Motor neuron (in vitro differentiated cells): ENCODE measurements at regions of chr2 and their contacts with region 1.

Region 1: GRCh38 chr2:64873472-64873924 is 115.7 kb upstream of the SLC1A4 start:
- ATAC-seq: peak; percentile 30 to 85 (median 43)
- H3K4me3 ChIP-seq: no peak overlapping the region
- H3K27ac ChIP-seq: no peak overlapping the region
- H3K4me1 ChIP-seq: peaks cover 6 to 13% of the 10 kb centered on the region in 2 donors

Region 2: GRCh38 chr2:64036034-64036705 is 837.3 kb before region 1 on chr2:
- in situ Hi-C with region 1: loop called in 1 of 9 experiments (anchors 25 kb)
- ATAC-seq: peak in 2 of 8 experiments; percentile 71 to 92
- H3K4me3 ChIP-seq: no peak overlapping the region
- H3K27ac ChIP-seq: no peak overlapping the region
- H3K4me1 ChIP-seq: no peaks in the 10 kb centered on the region

Region 3: DNA sequence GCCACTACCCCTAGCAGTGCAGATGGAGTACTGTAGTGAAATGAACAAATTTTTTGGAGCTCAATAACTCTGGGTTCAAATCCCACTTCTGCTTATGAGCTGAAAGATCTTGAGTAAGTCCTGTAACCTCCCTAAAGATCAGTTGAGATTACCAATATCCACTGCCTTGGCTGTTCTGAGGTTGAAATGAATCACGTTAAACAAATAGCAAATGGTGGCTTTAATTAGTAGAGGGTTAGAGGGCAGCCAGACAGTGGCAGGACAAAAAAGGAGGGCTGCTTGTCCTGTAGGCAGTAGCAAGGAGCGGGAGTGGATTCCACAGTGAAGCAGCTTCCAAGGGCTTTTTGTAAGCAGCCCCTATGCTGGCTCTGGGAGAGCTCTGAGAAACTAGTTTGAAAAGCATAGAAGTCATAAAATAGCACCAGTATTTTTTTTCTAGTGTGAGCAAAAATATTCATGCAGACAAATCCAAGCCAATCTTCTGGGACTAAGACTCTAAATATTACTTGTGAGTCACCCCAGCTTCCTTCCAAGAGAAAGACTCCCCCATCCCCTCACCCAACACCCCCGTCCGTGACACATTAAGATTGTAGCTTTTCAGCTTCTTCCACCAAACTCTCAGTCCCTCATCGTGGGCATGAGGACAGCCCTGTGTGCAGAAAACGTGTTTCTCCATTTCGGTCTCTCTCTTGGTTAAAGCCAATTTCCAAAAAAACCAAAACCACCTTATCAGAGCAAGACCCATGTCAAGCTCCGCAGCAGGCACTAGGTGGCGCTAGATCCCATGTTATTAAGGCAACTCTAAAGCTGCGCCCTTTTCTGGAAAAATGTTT is 543.0 kb before region 1 on chr2:
- in situ Hi-C with region 1: loop called in 2 of 9 experiments (anchors 25 kb)
- ATAC-seq: peak; percentile 37 to 83 (median 72)
- H3K4me3 ChIP-seq: peak overlapping the region in 2 of 5 donors; percentile 10 to 25
- H3K27ac ChIP-seq: no peak overlapping the region
- H3K4me1 ChIP-seq: peaks cover 24 to 26% of the 10 kb centered on the region in 2 donors

Region 4: DNA sequence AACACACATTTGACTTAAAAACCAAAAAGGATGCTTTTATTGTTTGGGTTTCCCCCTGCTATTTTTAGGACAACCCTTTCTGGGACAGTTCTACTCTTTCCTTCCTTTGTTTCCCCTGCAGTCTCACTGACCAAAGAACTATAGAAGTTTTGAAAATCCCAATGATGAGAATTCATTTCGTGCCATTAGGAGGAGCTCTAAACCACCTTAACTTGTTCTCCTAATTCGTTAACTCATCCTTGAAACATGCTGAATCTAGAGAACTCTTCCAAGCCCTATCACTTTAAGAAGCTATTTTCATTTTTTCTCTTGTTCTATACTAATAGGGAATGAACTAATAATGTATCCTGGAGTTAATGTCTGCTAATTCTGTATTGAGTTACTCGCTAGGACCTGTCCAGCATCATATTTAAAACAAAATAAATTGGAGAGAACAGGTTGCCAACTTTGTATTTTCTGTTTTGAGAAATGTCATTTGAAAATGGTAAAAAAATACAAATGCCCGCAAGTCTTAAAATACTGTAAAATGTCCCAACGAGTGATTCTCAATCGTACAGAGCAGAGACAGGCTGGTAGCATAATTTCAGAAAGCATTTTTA is 286.5 kb before region 1 on chr2:
- in situ Hi-C with region 1: loop called in 1 of 9 experiments (anchors 25 kb)
- ATAC-seq: peak in 4 of 8 experiments; percentile 50 to 70 (median 62)
- H3K4me3 ChIP-seq: no peak overlapping the region
- H3K27ac ChIP-seq: no peak overlapping the region
- H3K4me1 ChIP-seq: no peaks in the 10 kb centered on the region

Region 5: GRCh38 chr2:64609227-64609941 is 264.1 kb before region 1 on chr2:
- in situ Hi-C with region 1: loop called in 1 of 9 experiments (anchors 25 kb)
- ATAC-seq: peak in 5 of 8 experiments; percentile 8 to 61 (median 36)
- H3K4me3 ChIP-seq: no peak overlapping the region
- H3K27ac ChIP-seq: no peak overlapping the region
- H3K4me1 ChIP-seq: no peaks in the 10 kb centered on the region

Region 6: GRCh38 chr2:64644177-64645004 is 229.1 kb before region 1 on chr2:
- in situ Hi-C with region 1: loop called in 6 of 9 experiments (anchors 25 kb)
- ATAC-seq: peak; percentile 67 to 79 (median 70)
- H3K4me3 ChIP-seq: peak overlapping the region; percentile 9 to 38 (median 29)
- H3K27ac ChIP-seq: peak overlapping the region; percentile 67 to 68
- H3K4me1 ChIP-seq: peaks cover 59 to 64% of the 10 kb centered on the region in 2 donors

Region 7: DNA sequence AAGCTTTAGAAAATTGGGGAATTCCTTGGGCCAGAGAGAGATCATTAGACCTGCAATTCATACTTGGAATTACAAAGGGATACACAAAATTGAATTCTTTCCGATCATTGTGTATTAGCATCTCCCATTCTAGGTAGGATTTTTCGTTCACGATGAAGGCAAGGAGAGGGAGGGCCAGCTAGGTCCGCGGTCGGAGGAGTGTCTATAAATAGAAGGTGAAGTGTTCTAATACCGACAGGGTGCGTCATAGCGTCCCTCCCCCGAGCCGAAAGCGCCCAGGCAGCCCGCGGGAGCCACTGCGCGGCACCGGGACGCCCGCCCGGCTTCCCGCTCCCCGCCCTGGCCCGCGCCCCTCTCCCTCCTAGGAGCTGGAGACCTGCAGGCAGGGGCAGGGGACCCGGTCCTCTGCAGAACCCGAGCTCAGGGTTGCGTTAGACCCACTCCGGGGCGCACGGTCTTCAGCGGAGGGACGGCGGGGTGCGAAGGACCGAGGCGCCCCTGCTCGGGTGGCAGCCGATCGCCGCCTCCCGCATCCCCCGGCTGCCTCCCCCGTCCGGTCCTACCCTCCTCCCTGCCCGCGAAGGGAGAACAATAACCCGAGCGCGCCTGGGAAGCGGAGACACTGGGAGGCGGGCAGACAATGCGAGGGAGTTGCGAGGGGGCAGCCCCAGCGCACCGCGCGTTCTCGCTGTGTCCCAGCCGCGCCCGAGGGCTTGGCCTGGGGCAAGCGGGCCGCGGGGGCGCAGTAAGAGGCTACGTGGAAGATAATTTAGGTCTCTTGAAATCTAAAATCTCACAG is 105.6 kb before region 1 on chr2:
- in situ Hi-C with region 1: loop called in 1 of 9 experiments (anchors 25 kb)
- ATAC-seq: peak; percentile 91 to 94 (median 92)
- H3K4me3 ChIP-seq: peak overlapping the region; percentile 48 to 67 (median 58)
- H3K27ac ChIP-seq: peak overlapping the region; percentile 90 to 95
- H3K4me1 ChIP-seq: peaks cover 11 to 13% of the 10 kb centered on the region in 2 donors

Region 8: GRCh38 chr2:65096948-65097347 is 223.4 kb after region 1 on chr2:
- in situ Hi-C with region 1: no loop called
- ATAC-seq: no peak
- H3K4me3 ChIP-seq: no peak overlapping the region
- H3K27ac ChIP-seq: no peak overlapping the region
- H3K4me1 ChIP-seq: no peaks in the 10 kb centered on the region